ENCODE measurements at regions of chr6 and their contacts with region 1.

Region 1: DNA sequence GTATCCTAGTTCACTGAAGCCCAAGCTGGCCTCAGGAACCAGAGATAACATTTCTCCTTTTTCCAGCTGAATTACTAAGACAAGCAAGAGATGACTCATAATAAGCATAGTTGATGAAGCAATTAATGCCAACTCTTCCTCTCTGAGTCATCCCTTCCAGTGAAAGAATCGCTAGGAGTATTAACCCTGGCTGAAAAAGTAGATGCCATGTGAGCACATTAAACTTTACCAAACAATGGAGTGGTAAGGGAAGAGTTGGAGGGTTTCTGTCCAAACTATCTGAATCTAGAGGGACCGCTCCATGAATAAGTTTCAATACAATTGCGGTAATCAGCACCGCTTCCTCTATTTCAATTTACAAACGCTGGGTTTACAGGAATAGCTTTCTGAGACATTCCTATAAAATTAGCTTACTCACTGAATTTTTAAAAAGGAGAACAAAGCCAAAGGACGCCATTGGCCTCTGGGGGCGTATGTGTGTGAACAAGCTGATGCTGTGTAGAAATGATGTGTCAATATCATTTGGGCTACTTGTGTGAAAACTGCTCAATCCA is 48.3 kb downstream of the ATXN1 start:
- DNase-seq: no peak
- ATAC-seq: peak; percentile 70
- H3K4me3 ChIP-seq: peak overlapping the region; percentile 3
- H3K4me3 Mint-ChIP-seq: peak overlapping the region in 7 of 10 donors; percentile 12 to 79 (median 56)
- H3K27ac ChIP-seq: no peak overlapping the region
- H3K27ac Mint-ChIP-seq: peak overlapping the region in 5 of 9 donors; percentile 52 to 85 (median 67)
- H3K4me1 ChIP-seq: peaks cover 0 to 18% of the 10 kb centered on the region in 2 donors
- H3K4me1 Mint-ChIP-seq: peaks cover 11 to 54% (median 22%) of the 10 kb centered on the region in 7 donors
- H3K27me3 ChIP-seq: no peaks in the 10 kb centered on the region
- H3K27me3 Mint-ChIP-seq: no peaks in the 10 kb centered on the region

Region 2: GRCh38 chr6:16200321-16200883 is 512.6 kb before region 1 on chr6:
- CTCF ChIA-PET with region 1: no interaction called
- POLR2A ChIA-PET with region 1: no interaction called
- intact Hi-C with region 1: no loop called
- DNase-seq: no peak
- ATAC-seq: no peak
- H3K4me3 ChIP-seq: no peak overlapping the region
- H3K4me3 Mint-ChIP-seq: no peak overlapping the region
- H3K27ac ChIP-seq: no peak overlapping the region
- H3K27ac Mint-ChIP-seq: no peak overlapping the region
- H3K4me1 ChIP-seq: no peaks in the 10 kb centered on the region
- H3K4me1 Mint-ChIP-seq: no peaks in the 10 kb centered on the region
- H3K27me3 ChIP-seq: no peaks in the 10 kb centered on the region
- H3K27me3 Mint-ChIP-seq: peaks cover 1 to 27% (median 6%) of the 10 kb centered on the region in 5 donors

Region 3: DNA sequence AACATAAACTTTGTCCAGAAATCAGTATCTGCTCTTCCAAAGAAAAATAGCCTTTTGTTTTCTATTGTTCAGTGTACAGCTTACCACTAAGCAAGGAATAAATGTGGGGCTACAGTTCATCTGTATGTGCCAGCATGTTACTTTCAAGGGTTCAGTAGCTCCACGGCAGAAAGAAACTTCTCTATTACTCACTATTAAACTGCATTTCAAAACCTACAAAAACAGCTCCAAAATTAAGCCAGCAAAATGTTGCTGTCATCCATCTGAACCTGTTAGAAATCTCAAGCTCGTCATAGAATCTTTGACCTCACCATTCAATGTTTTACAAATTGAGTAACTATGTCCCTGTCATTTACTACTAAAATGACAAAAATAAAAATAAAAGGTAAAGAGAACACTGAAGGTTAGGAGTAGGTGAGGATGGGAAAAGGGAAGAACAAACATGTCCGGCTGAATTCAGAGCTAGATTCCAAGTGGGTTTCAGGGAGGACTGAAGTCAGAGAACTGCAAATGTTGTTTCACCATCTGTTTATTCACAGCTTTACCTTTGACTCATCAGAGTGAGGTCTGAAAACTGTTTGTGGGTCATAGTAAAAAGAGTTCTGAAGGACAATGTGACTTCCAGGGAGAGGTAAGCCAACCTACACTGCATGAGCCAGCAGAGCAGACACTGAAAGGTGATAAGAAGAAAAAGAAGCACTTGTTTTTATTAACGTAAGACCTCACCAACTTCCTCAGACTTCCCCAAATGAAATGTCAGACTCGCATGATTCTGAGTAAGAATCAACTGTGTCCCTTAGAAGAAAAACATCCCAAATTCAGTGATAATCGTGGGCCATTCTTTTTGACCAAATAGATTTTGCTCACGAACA is 13.8 kb before region 1 on chr6:
- CTCF ChIA-PET with region 1: no interaction called
- POLR2A ChIA-PET with region 1: interaction called, 3 read pairs
- intact Hi-C with region 1: loop called in 1 of 2 experiments (anchors 2 kb)
- DNase-seq: no peak
- ATAC-seq: peak; percentile 62
- H3K4me3 ChIP-seq: peak overlapping the region; percentile 44
- H3K4me3 Mint-ChIP-seq: peak overlapping the region in 5 of 10 donors; percentile 9 to 87 (median 78)
- H3K27ac ChIP-seq: no peak overlapping the region
- H3K27ac Mint-ChIP-seq: peak overlapping the region in 3 of 9 donors; percentile 64 to 89 (median 65)
- H3K4me1 ChIP-seq: peaks cover 0 to 57% of the 10 kb centered on the region in 2 donors
- H3K4me1 Mint-ChIP-seq: peaks cover 30 to 68% (median 35%) of the 10 kb centered on the region in 7 donors
- H3K27me3 ChIP-seq: no peaks in the 10 kb centered on the region
- H3K27me3 Mint-ChIP-seq: no peaks in the 10 kb centered on the region

Measured in naive thymus-derived CD4-positive, alpha-beta T cell (primary cell).